Activated CD8-positive, alpha-beta T cell treated with anti-CD3 and anti-CD28 coated beads, Interleukin-2, amount 10 ng/mL, durations not matched to agents 7 days and 5 days (primary cell): ENCODE measurements at regions of chr3 and their contacts with region 1.

Region 1: GRCh38 chr3:56484122-56484521 is 15.9 kb upstream of the ERC2 start:
- DNase-seq: no peak
- ATAC-seq: no peak
- H3K4me3 Mint-ChIP-seq: no peak overlapping the region
- H3K27ac Mint-ChIP-seq: no peak overlapping the region
- H3K4me1 Mint-ChIP-seq: no peaks in the 10 kb centered on the region
- H3K27me3 Mint-ChIP-seq: peaks cover 3% of the 10 kb centered on the region

Region 2: GRCh38 chr3:56494686-56495322 is 10.7 kb after region 1 on chr3:
- CTCF ChIA-PET with region 1: interaction called, 12 read pairs
- POLR2A ChIA-PET with region 1: no interaction called
- DNase-seq: peak; percentile 86
- ATAC-seq: peak; percentile 93
- H3K4me3 Mint-ChIP-seq: no peak overlapping the region
- H3K27ac Mint-ChIP-seq: no peak overlapping the region
- H3K4me1 Mint-ChIP-seq: no peaks in the 10 kb centered on the region
- H3K27me3 Mint-ChIP-seq: peaks cover 6% of the 10 kb centered on the region